ENCODE measurements at regions of chr22 and their contacts with region 1.

Region 1: DNA sequence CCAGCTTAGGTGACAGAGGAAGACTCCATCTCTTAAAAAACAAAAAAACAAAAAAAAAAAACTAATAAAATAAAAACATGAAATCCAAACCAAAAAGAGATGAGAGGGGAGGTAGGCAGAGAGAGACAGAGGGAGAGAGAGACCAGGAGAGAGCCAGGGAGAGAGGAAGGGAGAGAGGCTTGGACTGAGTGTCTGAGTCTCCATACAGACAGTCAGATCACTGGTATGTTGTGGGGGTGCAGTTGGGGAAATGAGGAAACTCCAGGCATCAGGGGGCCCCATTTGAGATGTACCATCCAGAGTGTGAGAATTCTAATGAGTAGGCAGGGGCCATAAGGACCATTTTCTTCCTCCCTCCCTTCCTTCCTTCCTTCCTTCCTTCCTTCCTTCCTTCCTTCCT is 53.1 kb upstream of the SEPTIN5 start:
- DNase-seq: no peak
- H3K4me3 ChIP-seq: no peak overlapping the region
- H3K27ac ChIP-seq: no peak overlapping the region
- H3K4me1 ChIP-seq: no peaks in the 10 kb centered on the region
- CTCF ChIP-seq: no peak

Region 2: GRCh38 chr22:19703869-19704268 is 42.7 kb after region 1 on chr22:
- CTCF ChIA-PET with region 1: no interaction called
- POLR2A ChIA-PET with region 1: interaction called, 10 read pairs
- intact Hi-C with region 1: no loop called
- DNase-seq: no peak
- H3K4me3 ChIP-seq: no peak overlapping the region
- H3K27ac ChIP-seq: no peak overlapping the region
- H3K4me1 ChIP-seq: no peaks in the 10 kb centered on the region
- CTCF ChIP-seq: no peak

Measured in OCI-LY7 (cell line).